ENCODE measurements at regions of chr3 and their contacts with region 1.

Region 1: GRCh38 chr3:88149509-88150362 is at the start of gene C3orf38:
- DNase-seq: peak; percentile 91 to 93
- H3K4me3 ChIP-seq: peak within 1 kb of the TSS; percentile 48 to 83 (median 83)
- H3K27ac ChIP-seq: peak within 1 kb of the TSS; percentile 85 to 99 (median 88)
- H3K4me1 ChIP-seq: peaks cover 13 to 14% of the 10 kb centered on the region in 2 donors
- H3K27me3 ChIP-seq: no peaks in the 10 kb centered on the region
- CTCF ChIP-seq: no peak
- POLR2A ChIP-seq: peak in 1 of 2 donors; percentile 76
- total RNA-seq, gene C3orf38: 23.0 to 30.2 (median 24.7) TPM

Region 2: DNA sequence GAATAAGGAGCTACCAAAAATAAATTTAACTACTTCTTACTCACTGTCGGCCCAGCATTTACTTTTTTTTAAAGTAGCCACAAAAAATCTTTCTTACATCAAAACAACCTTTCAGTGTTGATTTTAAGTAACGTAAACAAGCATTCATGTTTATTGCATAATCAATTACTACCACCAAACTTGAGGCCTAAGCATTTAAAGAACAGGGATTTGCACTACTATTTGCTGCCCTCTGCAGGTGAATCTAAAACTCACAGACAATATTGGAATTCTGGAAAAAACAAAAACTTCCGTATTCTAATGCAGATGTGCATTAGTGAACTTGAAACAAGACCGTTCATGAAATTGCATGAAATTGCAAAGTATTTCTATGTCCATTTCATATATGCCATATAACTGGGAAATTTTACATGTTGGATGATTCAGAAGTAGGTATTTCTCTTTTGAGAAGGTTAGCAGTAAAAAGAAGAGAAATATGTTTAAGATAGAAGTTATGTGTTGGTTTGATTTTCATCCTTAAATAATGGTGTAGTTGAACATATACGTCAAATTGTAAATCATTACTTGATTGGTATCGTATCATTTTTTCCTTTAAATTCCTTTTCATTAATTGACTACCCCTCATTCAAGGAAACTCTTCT is 146.5 kb before region 1 on chr3:
- intact Hi-C with region 1: no loop called
- DNase-seq: no peak
- H3K4me3 ChIP-seq: no peak overlapping the region
- H3K27ac ChIP-seq: no peak overlapping the region
- H3K4me1 ChIP-seq: no peaks in the 10 kb centered on the region
- H3K27me3 ChIP-seq: no peaks in the 10 kb centered on the region
- CTCF ChIP-seq: peak; percentile 14 to 80 (median 61)
- POLR2A ChIP-seq: no peak

Region 3: DNA sequence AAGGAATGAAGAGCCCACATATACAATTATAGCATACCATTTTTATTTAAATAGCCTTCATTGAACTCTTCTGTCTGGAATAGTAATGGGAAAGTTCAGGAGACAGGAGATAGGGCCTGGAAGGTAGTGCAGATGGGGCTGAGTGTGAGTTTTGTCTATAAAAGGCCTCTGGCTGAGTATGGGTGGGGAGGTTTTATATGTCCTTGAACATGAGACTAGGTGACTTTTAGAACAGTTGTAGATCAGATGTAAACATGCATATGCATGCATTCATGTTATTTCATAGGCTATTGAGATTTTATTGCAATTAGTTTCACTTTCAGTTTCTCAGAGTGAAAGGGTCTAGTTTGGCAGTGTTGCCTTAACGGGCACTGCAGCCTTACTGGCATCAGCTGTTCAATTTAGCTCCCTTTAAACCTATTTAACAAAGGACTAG is 118.1 kb before region 1 on chr3:
- intact Hi-C with region 1: no loop called
- DNase-seq: peak; percentile 11 to 26
- H3K4me3 ChIP-seq: peak overlapping the region in 1 of 3 donors; percentile 16
- H3K27ac ChIP-seq: peak overlapping the region in 2 of 3 donors; percentile 47 to 61
- H3K4me1 ChIP-seq: peaks cover 0 to 3% of the 10 kb centered on the region in 2 donors
- H3K27me3 ChIP-seq: no peaks in the 10 kb centered on the region
- CTCF ChIP-seq: no peak
- POLR2A ChIP-seq: no peak

Region 4: GRCh38 chr3:88059369-88060170 is 90.2 kb before region 1 on chr3:
- intact Hi-C with region 1: loop called (anchors 10 kb)
- DNase-seq: peak; percentile 5 to 21
- H3K4me3 ChIP-seq: peak overlapping the region; percentile 72 to 89 (median 77)
- H3K27ac ChIP-seq: peak overlapping the region; percentile 71 to 92 (median 90)
- H3K4me1 ChIP-seq: peaks cover 27 to 34% of the 10 kb centered on the region in 2 donors
- H3K27me3 ChIP-seq: no peaks in the 10 kb centered on the region
- CTCF ChIP-seq: no peak
- POLR2A ChIP-seq: no peak

Measured in thyroid gland (tissue), 4 donors.